ENCODE measurements at regions of chrX and their contacts with region 1.

Region 1: GRCh38 chrX:21985332-21985777 is 44.8 kb downstream of the SMS start:
- DNase-seq: peak; percentile 77
- H3K4me3 Mint-ChIP-seq: no peak overlapping the region
- H3K27ac Mint-ChIP-seq: peak overlapping the region; percentile 45
- H3K4me1 Mint-ChIP-seq: peaks cover 18% of the 10 kb centered on the region
- H3K27me3 Mint-ChIP-seq: no peaks in the 10 kb centered on the region

Region 2: GRCh38 chrX:21870494-21870893 is 114.9 kb before region 1 on chrX:
- CTCF ChIA-PET with region 1: no interaction called
- POLR2A ChIA-PET with region 1: no interaction called
- intact Hi-C with region 1: no loop called
- DNase-seq: no peak
- H3K4me3 Mint-ChIP-seq: no peak overlapping the region
- H3K27ac Mint-ChIP-seq: no peak overlapping the region
- H3K4me1 Mint-ChIP-seq: no peaks in the 10 kb centered on the region
- H3K27me3 Mint-ChIP-seq: no peaks in the 10 kb centered on the region

Region 3: GRCh38 chrX:22025751-22026150 is 40.4 kb after region 1 on chrX:
- CTCF ChIA-PET with region 1: no interaction called
- POLR2A ChIA-PET with region 1: no interaction called
- intact Hi-C with region 1: loop called (anchors 5 kb)
- DNase-seq: no peak
- H3K4me3 Mint-ChIP-seq: no peak overlapping the region
- H3K27ac Mint-ChIP-seq: no peak overlapping the region
- H3K4me1 Mint-ChIP-seq: peaks cover 10% of the 10 kb centered on the region
- H3K27me3 Mint-ChIP-seq: no peaks in the 10 kb centered on the region

Region 4: DNA sequence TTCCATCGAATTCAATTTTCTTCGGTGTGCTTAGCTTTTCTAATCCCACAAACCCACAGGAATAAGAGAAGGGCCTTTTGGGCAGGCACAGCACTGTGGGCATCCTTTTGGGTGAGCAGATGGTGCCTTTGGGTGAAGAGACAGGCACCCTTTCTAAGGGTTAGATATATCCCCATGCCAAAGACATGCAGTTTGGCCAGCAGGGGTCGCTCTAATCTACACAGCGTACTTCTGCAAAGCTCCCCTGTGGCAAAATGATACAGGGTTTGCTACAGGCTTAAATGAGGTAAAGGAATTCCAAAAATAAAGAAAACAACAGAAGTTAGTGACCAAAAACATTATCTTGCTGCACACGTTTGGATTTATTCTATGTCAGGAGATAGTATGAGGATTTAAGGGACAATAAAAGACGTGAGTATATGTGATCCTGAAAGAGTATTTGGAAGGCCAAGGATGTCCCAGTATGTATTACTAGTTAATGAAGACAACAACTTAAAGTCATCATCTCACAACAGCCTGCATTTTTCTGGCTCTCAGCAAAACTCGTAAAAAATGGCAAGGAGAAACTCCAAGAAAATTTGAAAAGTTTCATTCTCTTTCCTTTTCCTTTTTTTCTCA is 96.2 kb after region 1 on chrX:
- CTCF ChIA-PET with region 1: interaction called, 11 read pairs
- POLR2A ChIA-PET with region 1: no interaction called
- intact Hi-C with region 1: loop called (anchors 5 kb)
- DNase-seq: peak; percentile 65
- H3K4me3 Mint-ChIP-seq: no peak overlapping the region
- H3K27ac Mint-ChIP-seq: no peak overlapping the region
- H3K4me1 Mint-ChIP-seq: no peaks in the 10 kb centered on the region
- H3K27me3 Mint-ChIP-seq: no peaks in the 10 kb centered on the region

Region 5: GRCh38 chrX:22192417-22193060 is 207.2 kb after region 1 on chrX:
- CTCF ChIA-PET with region 1: interaction called, 17 read pairs
- POLR2A ChIA-PET with region 1: no interaction called
- intact Hi-C with region 1: loop called (anchors 1 kb)
- DNase-seq: peak; percentile 62
- H3K4me3 Mint-ChIP-seq: no peak overlapping the region
- H3K27ac Mint-ChIP-seq: no peak overlapping the region
- H3K4me1 Mint-ChIP-seq: peaks cover 3% of the 10 kb centered on the region
- H3K27me3 Mint-ChIP-seq: no peaks in the 10 kb centered on the region

Measured in activated CD4-positive, alpha-beta memory T cell treated with anti-CD3 and anti-CD28 coated beads for 36 hours (primary cell).